AG04450 (cell line): ENCODE measurements at regions of chr11 and their contacts with region 1.

Region 1: DNA sequence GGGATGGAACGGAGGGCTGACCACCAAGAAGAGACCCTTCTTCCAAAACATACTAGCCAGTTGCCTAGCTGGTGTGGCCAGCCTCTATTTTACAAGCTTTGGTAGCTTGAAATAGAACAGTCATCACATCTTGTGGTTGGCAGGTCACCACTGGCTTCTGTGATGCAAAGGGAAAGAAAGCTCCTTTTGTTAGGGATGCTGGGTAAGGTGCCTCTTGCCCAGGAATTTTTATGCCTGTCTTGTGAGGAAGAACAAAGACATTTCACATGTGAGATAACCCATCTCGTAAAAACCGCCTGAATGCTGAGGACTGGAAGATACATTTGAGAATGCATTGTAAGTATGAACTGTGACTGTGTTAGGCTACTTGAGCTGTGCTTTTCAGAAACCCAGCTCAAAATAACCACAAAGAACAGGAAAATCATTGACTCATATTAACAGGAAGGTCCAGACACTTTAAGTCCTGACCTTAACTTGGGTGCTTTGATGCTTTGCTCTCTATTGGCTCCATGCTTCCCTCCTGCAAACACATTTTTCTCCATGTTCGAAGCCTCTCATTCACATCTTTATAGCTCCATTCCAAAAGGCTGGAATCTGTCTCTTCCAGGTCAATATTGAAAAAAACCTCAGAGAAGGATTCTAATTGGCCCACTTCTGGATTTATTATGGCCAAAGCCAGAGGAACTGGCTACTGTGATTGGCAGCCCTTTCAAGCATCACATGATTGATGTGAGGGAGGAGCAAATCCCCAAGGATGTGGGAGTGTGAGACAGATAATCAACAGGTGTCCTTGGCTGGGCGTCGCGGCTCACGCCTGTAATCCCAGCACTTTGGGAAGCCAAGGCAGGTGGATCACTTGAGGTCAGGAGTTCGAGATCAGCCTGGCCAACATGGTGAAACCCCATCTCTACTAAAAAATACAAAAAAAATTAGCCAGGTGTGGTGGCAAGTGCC is 53.9 kb downstream of the MICAL2 start:
- DNase-seq: no peak
- H3K4me3 ChIP-seq: no peak overlapping the region
- H3K27ac ChIP-seq: peak overlapping the region; percentile 95
- H3K27me3 ChIP-seq: no peaks in the 10 kb centered on the region
- CTCF ChIP-seq: no peak

Region 2: DNA sequence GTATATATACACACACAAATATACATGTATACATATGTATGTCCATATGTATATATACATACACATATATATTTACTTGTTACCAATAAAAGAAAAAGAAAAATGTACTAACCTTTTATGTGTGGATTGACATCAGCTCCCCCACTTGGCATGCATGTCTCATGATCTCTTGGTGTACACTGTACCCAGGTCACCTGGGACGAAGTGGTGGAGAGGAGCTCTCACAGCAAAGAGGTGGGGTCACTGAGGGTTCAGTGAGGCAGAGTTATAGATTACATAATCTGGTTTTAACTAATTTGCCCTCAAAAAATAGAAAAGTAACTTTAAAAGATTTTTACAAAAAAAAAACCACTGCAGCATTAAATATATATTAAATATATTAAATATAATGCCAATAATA is 338.1 kb before region 1 on chr11:
- CTCF ChIA-PET with region 1: no interaction called
- POLR2A ChIA-PET with region 1: no interaction called
- DNase-seq: no peak
- H3K4me3 ChIP-seq: no peak overlapping the region
- H3K27ac ChIP-seq: no peak overlapping the region
- H3K27me3 ChIP-seq: no peaks in the 10 kb centered on the region
- CTCF ChIP-seq: no peak

Region 3: DNA sequence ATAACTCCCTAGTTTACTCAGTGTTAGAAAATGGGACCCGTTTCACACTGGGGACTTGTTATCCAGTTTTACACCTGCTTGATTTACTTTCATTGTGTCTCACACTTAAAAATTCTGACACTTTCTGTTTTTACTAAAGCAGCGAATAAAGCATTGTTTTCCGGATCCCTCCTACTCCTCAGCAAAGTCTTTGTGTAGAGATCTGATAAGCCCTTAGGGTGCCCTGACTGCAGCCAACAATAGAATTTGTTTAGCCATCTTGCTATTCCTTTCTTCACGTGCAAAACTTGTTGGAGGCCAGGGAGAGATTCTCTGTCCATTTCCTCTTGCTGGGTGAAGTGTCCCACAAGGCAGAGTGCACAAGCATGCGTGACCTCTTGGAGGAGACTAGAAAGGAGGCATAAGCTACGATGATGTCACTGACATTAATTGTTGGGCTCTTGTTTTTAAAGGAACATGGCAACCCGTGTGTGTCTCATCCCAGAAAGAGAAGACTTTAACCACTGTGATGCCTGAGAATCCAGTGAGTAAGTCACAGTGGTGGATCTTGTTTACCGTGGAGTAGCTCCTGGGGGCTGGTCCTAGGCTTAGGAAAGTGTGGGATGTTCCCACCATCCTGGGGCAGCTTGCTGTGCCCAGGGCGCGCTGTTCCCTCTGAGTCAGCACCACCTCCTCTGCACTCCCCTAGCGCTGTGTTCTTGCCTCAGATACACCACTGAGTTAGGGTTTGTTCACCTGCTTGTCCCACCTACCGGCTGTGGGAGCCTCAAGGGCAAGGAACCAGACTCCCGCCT is 26.2 kb before region 1 on chr11:
- CTCF ChIA-PET with region 1: no interaction called
- POLR2A ChIA-PET with region 1: interaction called, 12 read pairs
- DNase-seq: peak; percentile 83
- H3K4me3 ChIP-seq: no peak overlapping the region
- H3K27ac ChIP-seq: peak overlapping the region; percentile 98
- H3K27me3 ChIP-seq: no peaks in the 10 kb centered on the region
- CTCF ChIP-seq: no peak; the same call in 1 of the 2 replicates